Brain microvascular endothelial cell (primary cell): ENCODE measurements at regions of chr13 and their contacts with region 1.

Region 1: GRCh38 chr13:24220086-24220703 is 59.7 kb downstream of the SPATA13 start:
- DNase-seq: peak; percentile 82
- H3K4me3 ChIP-seq: no peak overlapping the region
- H3K27ac ChIP-seq: no peak overlapping the region
- H3K27me3 ChIP-seq: no peaks in the 10 kb centered on the region
- CTCF ChIP-seq: peak; percentile 75

Region 2: DNA sequence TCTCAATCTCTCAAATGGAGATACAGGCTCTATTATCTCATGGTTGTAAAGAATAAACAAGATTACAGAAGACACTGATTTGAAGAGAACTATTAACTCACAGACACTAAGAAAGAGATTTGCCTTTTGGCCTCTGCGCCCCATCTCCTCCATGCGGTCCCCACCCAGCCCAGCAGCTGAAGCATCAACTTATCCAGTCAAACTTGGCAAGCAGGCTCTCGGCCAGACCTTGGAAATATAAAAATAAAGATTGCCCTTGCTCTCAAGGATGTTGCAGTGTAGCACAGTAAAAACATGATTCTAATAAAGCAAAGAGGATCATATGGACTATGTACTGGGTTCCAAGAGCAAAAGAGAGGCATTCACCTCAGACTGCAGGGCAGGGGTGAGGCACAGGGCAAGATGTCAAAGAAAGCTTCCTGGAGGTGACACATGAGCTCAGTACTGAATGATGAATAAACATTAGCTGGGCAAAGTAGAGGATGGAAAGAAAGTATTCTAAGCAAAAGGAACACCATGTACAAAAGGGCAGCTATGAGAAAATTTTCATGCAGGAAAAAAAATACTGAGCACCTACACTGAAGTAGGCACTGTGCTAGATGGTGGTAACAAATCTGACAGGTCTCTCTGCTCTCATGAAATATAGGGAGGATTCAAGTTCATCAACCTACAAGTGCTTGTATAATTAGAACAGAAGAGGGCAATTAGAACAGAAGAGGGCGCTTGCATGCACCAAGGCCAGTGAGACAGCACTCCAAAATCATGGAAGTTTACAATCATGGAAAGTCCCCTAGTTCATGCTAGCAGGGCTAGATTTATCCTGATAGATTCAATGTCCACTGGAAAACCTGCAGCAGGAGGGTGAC is 871.7 kb before region 1 on chr13:
- in situ Hi-C with region 1: no loop called
- DNase-seq: no peak
- H3K4me3 ChIP-seq: no peak overlapping the region
- H3K27ac ChIP-seq: no peak overlapping the region
- H3K27me3 ChIP-seq: no peaks in the 10 kb centered on the region
- CTCF ChIP-seq: peak; percentile 29

Region 3: DNA sequence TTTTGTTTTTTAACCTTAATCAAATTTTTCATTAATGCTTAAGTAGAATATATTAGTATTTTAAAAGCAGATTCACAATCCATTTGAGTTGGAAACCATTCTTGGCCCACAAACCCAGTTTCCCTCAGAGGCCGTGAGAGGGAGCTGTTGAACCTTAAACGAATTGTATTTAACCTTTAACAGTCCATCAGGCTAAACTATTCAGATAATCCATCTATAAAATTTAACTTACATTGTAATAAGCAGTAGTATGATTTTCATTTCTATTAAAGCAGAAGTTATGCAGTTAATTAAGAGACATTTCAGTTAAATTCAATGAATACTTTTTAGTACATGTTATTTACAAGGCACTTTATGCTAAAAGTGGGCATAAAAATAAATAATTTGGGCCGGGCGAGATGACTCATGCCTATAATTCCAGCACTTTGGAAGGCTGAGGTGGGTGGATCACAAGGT is 199.8 kb before region 1 on chr13:
- in situ Hi-C with region 1: loop called (anchors 25 kb)
- DNase-seq: peak; percentile 67
- H3K4me3 ChIP-seq: no peak overlapping the region
- H3K27ac ChIP-seq: no peak overlapping the region
- H3K27me3 ChIP-seq: no peaks in the 10 kb centered on the region
- CTCF ChIP-seq: peak; percentile 88